ENCODE measurements at regions of chr18 and their contacts with region 1.

Region 1: DNA sequence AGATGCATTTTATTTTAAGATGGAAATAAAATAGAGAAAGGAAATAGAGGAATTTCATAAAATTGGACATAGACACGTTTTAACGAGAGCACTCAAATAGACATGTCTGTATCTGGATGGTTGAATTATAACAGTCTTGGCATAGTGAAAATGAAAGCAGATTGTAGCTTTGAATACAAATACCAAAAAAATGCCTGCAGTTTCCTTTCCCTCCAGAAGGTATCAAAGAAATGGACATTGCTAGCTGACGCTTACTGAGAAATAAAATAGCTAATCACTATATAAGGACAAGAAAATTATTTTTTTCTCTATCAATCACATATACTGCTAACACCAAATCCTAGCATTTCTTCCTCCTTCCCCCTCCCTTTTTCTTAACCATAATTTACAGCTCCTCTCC is 11.4 kb upstream of the MAPRE2 start:
- DNase-seq: no peak
- H3K4me3 ChIP-seq: no peak overlapping the region
- H3K27ac ChIP-seq: no peak overlapping the region
- H3K4me1 ChIP-seq: peaks cover 0 to 7% (median 0%) of the 10 kb centered on the region in 4 experiments; a peak in 2 of 7 replicates
- H3K27me3 ChIP-seq: no peaks in the 10 kb centered on the region
- CTCF ChIP-seq: no peak
- EP300 ChIP-seq: no peak
- POLR2A ChIP-seq: no peak
- RAD21 ChIP-seq: no peak

Region 2: DNA sequence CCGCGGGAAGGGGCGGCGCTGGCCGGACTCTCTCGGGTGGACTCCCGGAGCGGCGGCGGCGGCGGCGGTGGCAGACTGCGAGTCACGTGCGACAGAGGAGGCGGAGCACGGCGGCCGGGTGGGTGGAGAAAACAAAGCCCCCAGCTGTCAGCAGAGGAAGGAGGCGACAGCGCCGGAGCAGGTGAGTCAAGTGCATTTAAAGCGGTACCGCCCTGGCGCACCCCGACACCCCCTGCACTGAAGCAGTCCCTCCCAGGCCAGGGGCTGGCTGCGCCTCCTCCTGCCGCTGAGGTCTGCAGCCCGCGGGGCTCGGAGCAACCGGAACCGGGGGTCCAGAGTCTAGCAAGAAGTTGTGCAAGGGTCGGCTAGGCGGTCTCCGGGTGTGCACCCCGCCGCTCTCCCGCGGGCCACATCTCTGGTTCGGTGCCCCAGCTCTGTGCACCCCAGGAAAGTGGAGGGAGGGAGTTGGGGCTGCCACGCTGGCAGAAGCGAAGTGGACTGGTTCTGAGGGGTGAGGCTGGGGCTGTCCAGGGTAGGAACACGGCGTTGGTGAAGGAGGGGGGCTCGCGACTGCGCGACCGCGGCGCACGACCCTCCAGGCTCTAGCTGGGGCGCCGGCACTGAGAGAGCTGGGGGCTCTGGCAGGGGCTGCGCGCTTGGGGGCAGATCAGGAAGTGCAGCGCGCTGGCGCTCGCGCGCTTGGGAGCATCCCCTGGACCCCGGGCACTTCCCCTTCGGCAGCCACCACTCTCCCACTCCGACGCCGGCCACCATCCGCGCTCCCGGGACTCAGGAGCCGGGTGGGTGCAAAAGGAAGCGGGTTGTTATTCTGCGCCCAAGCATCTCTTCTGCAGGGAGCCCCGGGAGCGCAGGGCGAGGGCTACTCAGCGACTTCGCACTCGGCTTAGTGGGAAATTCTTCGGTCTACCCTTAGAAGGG is 52.6 kb before region 1 on chr18:
- CTCF ChIA-PET with region 1: no interaction called
- POLR2A ChIA-PET with region 1: no interaction called
- DNase-seq: peak in 1 of 2 experiments; percentile 89
- H3K4me3 ChIP-seq: peak overlapping the region; percentile 67 to 85 (median 77)
- H3K27ac ChIP-seq: no peak overlapping the region
- H3K4me1 ChIP-seq: peaks cover 8 to 11% (median 9%) of the 10 kb centered on the region in 4 experiments; a peak in 6 of 7 replicates
- H3K27me3 ChIP-seq: peaks cover 13 to 53% (median 42%) of the 10 kb centered on the region in 4 experiments
- CTCF ChIP-seq: no peak
- EP300 ChIP-seq: no peak
- POLR2A ChIP-seq: no peak
- RAD21 ChIP-seq: no peak

Region 3: GRCh38 chr18:35005963-35006577 is 23.7 kb before region 1 on chr18:
- CTCF ChIA-PET with region 1: interaction called, 22 read pairs
- POLR2A ChIA-PET with region 1: no interaction called
- DNase-seq: no peak
- H3K4me3 ChIP-seq: no peak overlapping the region
- H3K27ac ChIP-seq: no peak overlapping the region
- H3K4me1 ChIP-seq: peaks cover 0 to 2% (median 0%) of the 10 kb centered on the region in 4 experiments; a peak in 1 of 7 replicates
- H3K27me3 ChIP-seq: no peaks in the 10 kb centered on the region
- CTCF ChIP-seq: peak in 2 of 3 experiments; percentile 57 to 61; a peak in 3 of 4 replicates
- EP300 ChIP-seq: no peak
- POLR2A ChIP-seq: no peak
- RAD21 ChIP-seq: peak; percentile 82 to 89

Region 4: GRCh38 chr18:35040988-35041814 is 11.4 kb after region 1 on chr18 and contains the start of gene MAPRE2:
- CTCF ChIA-PET with region 1: interaction called, 13 read pairs
- POLR2A ChIA-PET with region 1: interaction called, 6 read pairs
- DNase-seq: peak; percentile 95 to 99
- H3K4me3 ChIP-seq: peak within 1 kb of the TSS; percentile 66 to 82 (median 76)
- H3K27ac ChIP-seq: peak within 1 kb of the TSS; percentile 84
- H3K4me1 ChIP-seq: peaks cover 0 to 7% (median 4%) of the 10 kb centered on the region in 4 experiments; a peak in 4 of 7 replicates
- H3K27me3 ChIP-seq: no peaks in the 10 kb centered on the region
- CTCF ChIP-seq: no peak
- EP300 ChIP-seq: no peak
- POLR2A ChIP-seq: peak; percentile 93 to 96
- RAD21 ChIP-seq: no peak
- total RNA-seq, gene MAPRE2: 30.9 and 32.6 TPM in 2 replicates

Region 5: DNA sequence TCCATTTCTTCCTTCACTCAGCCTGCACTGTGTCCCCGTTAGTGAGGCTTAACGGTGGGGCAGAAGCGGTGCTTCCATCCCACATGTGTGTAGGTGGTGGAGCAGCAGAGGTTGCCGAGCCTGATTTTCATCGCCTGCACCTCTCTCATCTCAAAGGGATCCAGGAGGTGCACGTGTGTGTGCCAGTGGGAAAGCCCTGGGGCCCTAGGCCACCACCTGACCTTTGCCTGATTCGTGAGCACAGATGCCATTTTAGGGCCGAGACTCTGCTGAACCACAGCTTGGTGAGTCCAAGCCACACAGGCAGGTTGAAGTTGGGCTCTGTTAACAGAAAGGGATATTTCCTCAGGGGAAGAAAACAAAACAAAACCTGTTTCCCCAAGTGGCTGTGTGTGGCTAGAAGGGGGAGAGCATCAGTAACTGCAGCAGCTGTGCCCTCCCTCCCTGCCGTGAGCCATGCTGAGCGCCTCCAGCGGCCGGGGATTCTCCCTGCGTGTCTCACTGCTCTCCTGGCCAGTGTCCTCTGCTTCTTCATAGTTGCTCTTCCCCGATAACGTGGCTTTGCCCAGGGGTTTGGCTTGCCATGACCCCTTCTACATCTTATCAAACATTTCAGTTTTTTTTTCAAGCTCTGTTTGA is 92.9 kb after region 1 on chr18:
- CTCF ChIA-PET with region 1: interaction called, 80 read pairs
- POLR2A ChIA-PET with region 1: no interaction called
- DNase-seq: peak in 1 of 2 experiments; percentile 73
- H3K4me3 ChIP-seq: no peak overlapping the region
- H3K27ac ChIP-seq: no peak overlapping the region
- H3K4me1 ChIP-seq: peaks cover 0 to 11% (median 5%) of the 10 kb centered on the region in 4 experiments; a peak in 6 of 7 replicates
- H3K27me3 ChIP-seq: no peaks in the 10 kb centered on the region
- CTCF ChIP-seq: peak; percentile 32 to 80 (median 72); a peak in 3 of 4 replicates
- EP300 ChIP-seq: no peak
- POLR2A ChIP-seq: no peak
- RAD21 ChIP-seq: peak; percentile 32 to 43

Measured in H1 (cell line).